ENCODE measurements at regions of chr19 and their contacts with region 1.

Region 1: GRCh38 chr19:33143897-33144405 is 12.0 kb downstream of the WDR88 start:
- DNase-seq: peak; percentile 71
- H3K4me3 ChIP-seq: peak overlapping the region in 2 of 4 donors; percentile 19 to 41
- H3K27ac ChIP-seq: peak overlapping the region in 1 of 4 donors; percentile 57
- H3K4me1 ChIP-seq: peaks cover 0 to 5% (median 0%) of the 10 kb centered on the region in 4 donors
- H3K27me3 ChIP-seq: no peaks in the 10 kb centered on the region
- CTCF ChIP-seq: peak; percentile 92 to 96 (median 96)
- EP300 ChIP-seq: no peak
- POLR2A ChIP-seq: no peak

Region 2: GRCh38 chr19:33176670-33177416 is 32.9 kb after region 1 on chr19:
- in situ Hi-C with region 1: loop called in 1 of 4 experiments (anchors 5 kb)
- intact Hi-C with region 1: no loop called
- DNase-seq: peak; percentile 96
- H3K4me3 ChIP-seq: peak overlapping the region; percentile 41 to 89 (median 71)
- H3K27ac ChIP-seq: peak overlapping the region; percentile 90 to 95 (median 94)
- H3K4me1 ChIP-seq: peaks cover 9 to 33% (median 24%) of the 10 kb centered on the region in 4 donors
- H3K27me3 ChIP-seq: no peaks in the 10 kb centered on the region
- CTCF ChIP-seq: peak in 3 of 5 experiments; percentile 23 to 50 (median 49)
- EP300 ChIP-seq: no peak
- POLR2A ChIP-seq: peak; percentile 91

Region 3: DNA sequence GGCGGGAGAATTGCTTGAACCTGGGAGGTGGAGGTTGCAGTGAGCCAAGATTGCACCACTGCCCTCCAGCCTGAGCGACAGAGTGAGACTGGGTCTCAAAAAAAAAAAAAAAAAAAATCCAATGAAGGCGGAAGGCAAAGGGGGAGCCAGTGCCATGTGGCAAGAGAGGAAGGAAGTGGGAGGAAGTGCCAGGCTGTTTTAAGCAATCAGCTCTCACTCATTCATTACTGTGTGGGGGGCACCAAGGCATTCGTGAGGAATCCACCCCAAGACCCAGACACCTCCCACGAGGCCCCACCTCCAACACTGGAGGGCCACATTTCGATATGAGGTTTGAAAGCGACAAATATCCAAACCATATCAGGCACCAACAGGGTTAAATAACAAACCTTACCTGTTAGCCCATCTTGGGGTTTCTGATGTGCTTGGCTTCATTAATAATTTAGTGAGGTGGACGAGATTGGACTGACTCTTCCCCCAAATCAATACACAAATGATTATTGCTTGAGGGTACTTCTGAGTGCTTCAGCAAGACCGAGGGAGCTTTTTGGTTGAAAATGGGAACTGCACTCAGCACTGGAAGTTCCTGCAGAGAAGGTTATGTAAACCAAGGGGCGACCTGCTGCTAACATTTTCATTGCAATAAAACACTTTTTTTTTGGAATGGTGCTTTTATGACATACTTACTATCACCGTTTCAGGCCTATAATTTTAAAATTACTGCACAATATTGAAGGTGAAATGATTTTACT is 42.7 kb after region 1 on chr19:
- in situ Hi-C with region 1: loop called in 1 of 4 experiments (anchors 5 kb)
- intact Hi-C with region 1: loop called (anchors 1 kb)
- DNase-seq: no peak
- H3K4me3 ChIP-seq: no peak overlapping the region
- H3K27ac ChIP-seq: no peak overlapping the region
- H3K4me1 ChIP-seq: peaks cover 0 to 13% (median 6%) of the 10 kb centered on the region in 4 donors
- H3K27me3 ChIP-seq: no peaks in the 10 kb centered on the region
- CTCF ChIP-seq: no peak
- EP300 ChIP-seq: no peak
- POLR2A ChIP-seq: no peak

Measured in transverse colon (tissue), 4 donors.